Tibial artery (tissue), 4 donors: ENCODE measurements at regions of chr7 and their contacts with region 1.

Region 1: GRCh38 chr7:111089822-111090426 is 1.0 kb upstream of the LRRN3 start:
- DNase-seq: no peak
- H3K4me3 ChIP-seq: no peak overlapping the region
- H3K27ac ChIP-seq: no peak overlapping the region
- H3K4me1 ChIP-seq: peaks cover 0 to 30% (median 5%) of the 10 kb centered on the region in 4 donors
- H3K27me3 ChIP-seq: no peaks in the 10 kb centered on the region
- CTCF ChIP-seq: peak; percentile 61 to 72

Region 2: GRCh38 chr7:111210996-111211395 is 121.1 kb after region 1 on chr7:
- intact Hi-C with region 1: no loop called
- DNase-seq: no peak
- H3K4me3 ChIP-seq: no peak overlapping the region
- H3K27ac ChIP-seq: no peak overlapping the region
- H3K4me1 ChIP-seq: no peaks in the 10 kb centered on the region
- H3K27me3 ChIP-seq: no peaks in the 10 kb centered on the region
- CTCF ChIP-seq: no peak

Region 3: DNA sequence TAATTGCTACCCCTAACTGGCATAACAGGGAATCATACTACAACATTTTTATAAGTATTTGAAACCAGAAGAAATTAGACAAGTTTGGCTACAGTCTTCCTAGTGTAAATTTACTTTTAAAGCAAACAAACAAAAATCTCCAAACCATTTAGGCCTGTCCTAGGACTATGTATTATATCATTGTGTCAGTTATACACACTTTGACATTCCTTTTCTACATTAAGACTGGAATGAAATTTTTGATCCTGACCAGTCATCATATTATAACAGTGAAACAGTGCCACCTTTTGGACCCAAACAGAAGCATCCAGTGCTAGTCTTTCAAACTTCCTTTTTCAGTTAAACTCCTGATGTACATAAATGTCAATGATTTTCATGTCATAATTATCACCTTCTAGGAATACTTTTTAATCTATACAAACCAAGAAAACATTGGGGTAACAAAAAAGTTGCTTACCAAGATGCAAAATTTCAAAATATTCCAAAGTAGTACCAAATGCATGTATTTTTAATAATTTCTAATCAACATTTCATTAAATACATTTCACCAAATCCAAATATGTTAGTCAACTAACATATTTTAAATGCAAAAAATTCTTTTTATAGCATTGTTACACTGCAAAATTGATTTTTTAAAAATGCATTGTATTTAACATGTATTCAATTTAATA is 396.7 kb after region 1 on chr7:
- intact Hi-C with region 1: loop called (anchors 5 kb)
- DNase-seq: no peak
- H3K4me3 ChIP-seq: no peak overlapping the region
- H3K27ac ChIP-seq: no peak overlapping the region
- H3K4me1 ChIP-seq: peaks cover 0 to 3% (median 0%) of the 10 kb centered on the region in 4 donors
- H3K27me3 ChIP-seq: no peaks in the 10 kb centered on the region
- CTCF ChIP-seq: peak; percentile 75 to 76